ENCODE measurements at regions of chr2 and their contacts with region 1.

Region 1: GRCh38 chr2:61538200-61538919 is at the start of gene XPO1:
- DNase-seq: peak; percentile 95 to 100 (median 99)
- ATAC-seq: peak; percentile 89
- H3K4me3 ChIP-seq: peak within 1 kb of the TSS; percentile 96
- H3K4me3 Mint-ChIP-seq: peak within 1 kb of the TSS; percentile 89 to 100 (median 98)
- H3K27ac ChIP-seq: peak within 1 kb of the TSS; percentile 98
- H3K27ac Mint-ChIP-seq: peak within 1 kb of the TSS; percentile 94 to 100 (median 99)
- H3K4me1 ChIP-seq: peaks cover 19 to 24% of the 10 kb centered on the region in 2 donors
- H3K4me1 Mint-ChIP-seq: peaks cover 24 to 43% (median 35%) of the 10 kb centered on the region in 7 donors
- H3K27me3 ChIP-seq: no peaks in the 10 kb centered on the region
- H3K27me3 Mint-ChIP-seq: peaks cover 0 to 8% (median 0%) of the 10 kb centered on the region in 5 donors
- total RNA-seq, gene XPO1: 132 to 192 (median 181) TPM

Region 2: GRCh38 chr2:60806988-60807681 is 731.2 kb before region 1 on chr2:
- CTCF ChIA-PET with region 1: no interaction called
- POLR2A ChIA-PET with region 1: interaction called, 3 read pairs
- intact Hi-C with region 1: loop called in 1 of 2 experiments (anchors 10 kb)
- DNase-seq: peak in 5 of 9 donors; percentile 15 to 53 (median 20)
- ATAC-seq: peak; percentile 65
- H3K4me3 ChIP-seq: no peak overlapping the region
- H3K4me3 Mint-ChIP-seq: peak overlapping the region; percentile 15 to 73 (median 52)
- H3K27ac ChIP-seq: peak overlapping the region; percentile 57
- H3K27ac Mint-ChIP-seq: peak overlapping the region; percentile 7 to 88 (median 73)
- H3K4me1 ChIP-seq: peaks cover 19 to 23% of the 10 kb centered on the region in 2 donors
- H3K4me1 Mint-ChIP-seq: peaks cover 28 to 51% (median 44%) of the 10 kb centered on the region in 7 donors
- H3K27me3 ChIP-seq: no peaks in the 10 kb centered on the region
- H3K27me3 Mint-ChIP-seq: no peaks in the 10 kb centered on the region

Region 3: DNA sequence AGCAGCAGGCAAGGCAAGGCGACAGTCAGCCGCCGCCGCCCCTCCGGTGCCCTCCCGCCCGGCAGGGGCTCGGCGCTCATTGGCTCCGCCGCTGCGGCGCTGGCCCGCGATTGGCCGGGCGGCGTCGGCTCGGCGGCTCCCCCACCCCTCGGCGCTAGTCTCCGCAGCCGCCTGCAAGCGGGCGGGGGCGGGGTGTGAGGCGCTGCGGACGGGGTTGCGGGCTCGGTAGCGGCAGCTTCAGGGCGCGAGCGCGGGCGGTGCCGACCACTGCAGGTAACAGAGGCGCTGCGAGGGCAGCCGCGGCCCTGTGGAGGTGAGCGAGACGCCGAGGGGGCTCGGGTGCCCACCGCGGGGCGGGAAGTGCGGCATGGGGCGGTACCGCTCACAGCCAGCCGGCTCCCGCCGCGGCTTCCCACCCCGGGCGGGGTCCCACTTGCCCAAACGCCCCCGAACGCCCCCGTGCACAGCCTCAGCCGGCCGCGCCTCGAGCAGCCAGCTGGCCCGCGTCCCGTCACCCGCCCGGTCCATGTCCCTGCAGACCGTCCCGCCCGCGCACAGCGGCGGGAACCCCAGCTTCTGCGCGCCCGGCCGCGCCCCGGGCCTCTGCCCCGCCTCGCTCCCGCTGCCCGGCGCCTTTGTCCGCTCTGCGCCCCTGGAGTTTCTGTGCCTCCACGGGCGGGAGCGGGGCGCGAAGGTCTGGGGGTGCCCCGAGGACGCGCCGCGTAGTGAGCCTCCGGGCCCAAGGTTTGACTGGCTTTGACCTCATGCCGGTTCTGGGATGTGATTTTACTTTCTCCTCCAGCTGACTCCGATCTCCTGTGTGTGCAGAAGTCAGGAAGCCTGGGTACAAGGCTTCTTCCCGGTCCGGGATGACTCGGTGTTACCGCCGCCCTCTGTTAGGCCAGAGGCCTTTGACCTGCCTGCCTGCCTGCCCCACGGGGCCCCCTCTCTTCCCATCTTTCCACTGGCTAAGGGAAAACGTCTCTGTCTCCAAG is 472.3 kb before region 1 on chr2 and contains the start of gene SANBR:
- CTCF ChIA-PET with region 1: no interaction called
- POLR2A ChIA-PET with region 1: no interaction called
- intact Hi-C with region 1: loop called (anchors 1 to 5 kb)
- DNase-seq: peak; percentile 78 to 90 (median 83)
- ATAC-seq: peak; percentile 99
- H3K4me3 ChIP-seq: peak within 1 kb of the TSS; percentile 59
- H3K4me3 Mint-ChIP-seq: peak within 1 kb of the TSS; percentile 79 to 98 (median 95)
- H3K27ac ChIP-seq: peak within 1 kb of the TSS; percentile 49
- H3K27ac Mint-ChIP-seq: peak within 1 kb of the TSS; percentile 12 to 94 (median 79)
- H3K4me1 ChIP-seq: peaks cover 0 to 6% of the 10 kb centered on the region in 2 donors
- H3K4me1 Mint-ChIP-seq: peaks cover 0 to 17% (median 5%) of the 10 kb centered on the region in 7 donors
- H3K27me3 ChIP-seq: no peaks in the 10 kb centered on the region
- H3K27me3 Mint-ChIP-seq: peaks cover 0 to 2% (median 0%) of the 10 kb centered on the region in 5 donors
- total RNA-seq, gene SANBR: 2.0 to 5.9 (median 3.6) TPM

Region 4: GRCh38 chr2:61426267-61426897 is 112.0 kb before region 1 on chr2:
- CTCF ChIA-PET with region 1: interaction called, 4 read pairs
- POLR2A ChIA-PET with region 1: interaction called, 21 read pairs
- intact Hi-C with region 1: loop called (anchors 1 to 2 kb)
- DNase-seq: peak; percentile 54 to 80 (median 73)
- ATAC-seq: peak; percentile 94
- H3K4me3 ChIP-seq: no peak overlapping the region
- H3K4me3 Mint-ChIP-seq: peak overlapping the region in 9 of 10 donors; percentile 16 to 78 (median 58)
- H3K27ac ChIP-seq: peak overlapping the region; percentile 72
- H3K27ac Mint-ChIP-seq: peak overlapping the region; percentile 65 to 99 (median 95)
- H3K4me1 ChIP-seq: peaks cover 11 to 34% of the 10 kb centered on the region in 2 donors
- H3K4me1 Mint-ChIP-seq: peaks cover 46 to 84% (median 71%) of the 10 kb centered on the region in 7 donors
- H3K27me3 ChIP-seq: no peaks in the 10 kb centered on the region
- H3K27me3 Mint-ChIP-seq: no peaks in the 10 kb centered on the region

Region 5: GRCh38 chr2:61640406-61640805 is 102.0 kb after region 1 on chr2:
- CTCF ChIA-PET with region 1: no interaction called
- POLR2A ChIA-PET with region 1: no interaction called
- intact Hi-C with region 1: no loop called
- DNase-seq: no peak
- ATAC-seq: no peak
- H3K4me3 ChIP-seq: no peak overlapping the region
- H3K4me3 Mint-ChIP-seq: no peak overlapping the region
- H3K27ac ChIP-seq: no peak overlapping the region
- H3K27ac Mint-ChIP-seq: no peak overlapping the region
- H3K4me1 ChIP-seq: no peaks in the 10 kb centered on the region
- H3K4me1 Mint-ChIP-seq: no peaks in the 10 kb centered on the region
- H3K27me3 ChIP-seq: no peaks in the 10 kb centered on the region
- H3K27me3 Mint-ChIP-seq: peaks cover 0 to 3% (median 0%) of the 10 kb centered on the region in 5 donors

Region 6: GRCh38 chr2:61670591-61671501 is 132.5 kb after region 1 on chr2:
- CTCF ChIA-PET with region 1: no interaction called
- POLR2A ChIA-PET with region 1: no interaction called
- intact Hi-C with region 1: loop called in 1 of 2 experiments (anchors 1 kb)
- DNase-seq: peak in 2 of 9 donors; percentile 3 to 13
- ATAC-seq: peak; percentile 36
- H3K4me3 ChIP-seq: peak overlapping the region; percentile 29
- H3K4me3 Mint-ChIP-seq: peak overlapping the region; percentile 2 to 88 (median 70)
- H3K27ac ChIP-seq: peak overlapping the region; percentile 52
- H3K27ac Mint-ChIP-seq: peak overlapping the region; percentile 26 to 95 (median 74)
- H3K4me1 ChIP-seq: peaks cover 3 to 10% of the 10 kb centered on the region in 2 donors
- H3K4me1 Mint-ChIP-seq: peaks cover 9 to 20% (median 18%) of the 10 kb centered on the region in 7 donors
- H3K27me3 ChIP-seq: no peaks in the 10 kb centered on the region
- H3K27me3 Mint-ChIP-seq: no peaks in the 10 kb centered on the region

Region 7: GRCh38 chr2:61854474-61855182 is 316.3 kb after region 1 on chr2:
- CTCF ChIA-PET with region 1: no interaction called
- POLR2A ChIA-PET with region 1: interaction called, 5 read pairs
- intact Hi-C with region 1: loop called (anchors 1 kb)
- DNase-seq: peak; percentile 61 to 96 (median 94)
- ATAC-seq: peak; percentile 95
- H3K4me3 ChIP-seq: peak overlapping the region; percentile 100
- H3K4me3 Mint-ChIP-seq: peak overlapping the region; percentile 92 to 99 (median 96)
- H3K27ac ChIP-seq: peak overlapping the region; percentile 77
- H3K27ac Mint-ChIP-seq: peak overlapping the region; percentile 90 to 98 (median 95)
- H3K4me1 ChIP-seq: peaks cover 4 to 6% of the 10 kb centered on the region in 2 donors
- H3K4me1 Mint-ChIP-seq: peaks cover 10 to 27% (median 17%) of the 10 kb centered on the region in 7 donors
- H3K27me3 ChIP-seq: no peaks in the 10 kb centered on the region
- H3K27me3 Mint-ChIP-seq: no peaks in the 10 kb centered on the region

Region 8: DNA sequence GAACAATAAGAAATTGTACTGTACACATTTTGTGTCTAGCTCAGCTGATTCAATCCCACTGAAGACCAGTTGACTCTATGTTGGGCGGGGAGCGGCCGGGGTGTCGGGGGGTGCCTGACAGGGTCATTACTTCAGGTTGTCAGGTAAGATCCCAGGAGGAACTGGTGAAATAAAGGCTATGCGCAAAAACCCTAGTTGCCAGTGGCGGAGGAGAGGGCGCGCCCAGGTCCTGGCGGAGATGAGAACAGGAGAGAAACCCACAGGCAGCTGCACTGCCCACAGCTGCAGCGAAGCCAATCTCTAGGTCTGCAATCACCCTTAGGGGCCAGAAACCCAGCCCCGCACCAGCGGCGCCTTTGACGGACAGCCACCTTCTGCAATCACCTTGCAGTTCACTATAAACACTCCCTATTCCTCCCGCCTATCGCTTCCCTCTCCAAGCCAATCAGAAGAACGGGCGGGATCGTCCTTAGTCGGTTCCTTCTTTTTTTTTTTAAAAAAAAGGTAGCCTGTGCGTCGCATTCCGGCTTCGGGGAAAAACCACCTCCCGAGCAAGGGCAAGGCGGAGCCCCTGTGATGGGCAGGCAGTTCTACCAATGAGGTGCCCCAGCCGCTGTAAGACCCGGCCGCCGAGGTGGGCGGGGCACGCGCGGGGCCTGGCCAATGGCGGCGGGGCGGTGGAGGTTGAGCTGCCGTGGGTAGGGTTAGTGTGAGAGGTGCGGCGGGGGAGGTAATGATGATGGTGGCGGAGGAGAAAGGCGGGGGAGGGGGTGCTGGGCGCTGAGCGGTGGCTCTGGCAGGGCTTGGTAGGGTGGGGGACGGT is 1166.9 kb after region 1 on chr2 and contains the start of gene EHBP1:
- CTCF ChIA-PET with region 1: no interaction called
- POLR2A ChIA-PET with region 1: no interaction called
- intact Hi-C with region 1: loop called (anchors 2 to 5 kb)
- DNase-seq: peak; percentile 95 to 99 (median 98)
- ATAC-seq: peak; percentile 98
- H3K4me3 ChIP-seq: peak within 1 kb of the TSS; percentile 82
- H3K4me3 Mint-ChIP-seq: peak within 1 kb of the TSS; percentile 83 to 98 (median 92)
- H3K27ac ChIP-seq: peak within 1 kb of the TSS; percentile 72
- H3K27ac Mint-ChIP-seq: peak within 1 kb of the TSS; percentile 76 to 93 (median 84)
- H3K4me1 ChIP-seq: peaks cover 0 to 25% of the 10 kb centered on the region in 2 donors
- H3K4me1 Mint-ChIP-seq: peaks cover 24 to 48% (median 31%) of the 10 kb centered on the region in 7 donors
- H3K27me3 ChIP-seq: no peaks in the 10 kb centered on the region
- H3K27me3 Mint-ChIP-seq: peaks cover 0 to 13% (median 0%) of the 10 kb centered on the region in 5 donors
- total RNA-seq, gene EHBP1: 23.8 to 31.5 (median 30.0) TPM